Dorsolateral prefrontal cortex (tissue), 120 donors: ENCODE measurements at regions of chr7 and their contacts with region 1.

Region 1: DNA sequence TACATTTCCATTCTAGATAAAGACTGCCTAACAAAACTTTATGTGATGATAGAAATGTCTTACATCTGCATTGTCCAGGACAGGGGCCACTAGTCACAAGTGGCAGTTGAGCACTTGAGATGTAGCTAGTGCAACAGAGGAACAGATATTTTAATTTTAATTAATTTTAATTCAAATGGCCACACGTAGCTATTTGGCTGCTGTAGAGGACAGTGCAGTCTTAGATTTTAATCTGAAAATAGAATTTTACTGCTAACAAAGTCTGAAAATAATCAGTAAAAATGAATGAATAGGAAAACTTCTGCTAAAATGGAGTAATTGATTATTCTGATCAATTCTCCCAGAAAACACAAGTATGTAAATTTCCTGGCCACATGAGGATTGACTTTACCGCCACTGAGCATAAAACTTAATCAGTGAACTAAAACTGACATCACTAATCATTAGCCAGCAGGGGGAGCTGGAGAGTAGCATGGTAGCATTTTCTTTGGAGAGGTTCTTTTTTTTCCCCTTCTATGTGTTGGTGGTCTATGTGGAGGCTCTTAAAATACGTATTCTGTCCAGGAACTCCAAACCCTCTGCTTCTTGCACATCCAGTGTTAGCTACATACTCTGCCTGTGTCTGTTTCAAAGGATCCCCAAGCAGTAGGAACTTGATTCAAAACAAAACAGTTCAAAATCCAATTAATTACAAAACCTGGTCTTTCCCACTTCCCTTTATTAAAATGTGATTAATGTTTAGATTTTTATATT is 52.1 kb downstream of the TSPAN12 start:
- DNase-seq: peak in 2 of 10 donors; percentile 14 to 17
- H3K4me3 ChIP-seq: no peak overlapping the region
- H3K27ac ChIP-seq: no peak overlapping the region
- H3K27me3 ChIP-seq: no peaks in the 10 kb centered on the region
- CTCF ChIP-seq: peak; percentile 71 to 91 (median 84)

Region 2: GRCh38 chr7:120185940-120186682 is 619.7 kb before region 1 on chr7:
- intact Hi-C with region 1: no loop called
- DNase-seq: no peak
- H3K4me3 ChIP-seq: no peak overlapping the region
- H3K27ac ChIP-seq: peak overlapping the region in 35 of 59 donors; percentile 5 to 82 (median 57)
- H3K27me3 ChIP-seq: no peaks in the 10 kb centered on the region
- CTCF ChIP-seq: no peak

Region 3: GRCh38 chr7:120774481-120774880 is 31.3 kb before region 1 on chr7:
- intact Hi-C with region 1: no loop called
- DNase-seq: no peak
- H3K4me3 ChIP-seq: no peak overlapping the region
- H3K27ac ChIP-seq: no peak overlapping the region
- H3K27me3 ChIP-seq: no peaks in the 10 kb centered on the region
- CTCF ChIP-seq: no peak

Region 4: DNA sequence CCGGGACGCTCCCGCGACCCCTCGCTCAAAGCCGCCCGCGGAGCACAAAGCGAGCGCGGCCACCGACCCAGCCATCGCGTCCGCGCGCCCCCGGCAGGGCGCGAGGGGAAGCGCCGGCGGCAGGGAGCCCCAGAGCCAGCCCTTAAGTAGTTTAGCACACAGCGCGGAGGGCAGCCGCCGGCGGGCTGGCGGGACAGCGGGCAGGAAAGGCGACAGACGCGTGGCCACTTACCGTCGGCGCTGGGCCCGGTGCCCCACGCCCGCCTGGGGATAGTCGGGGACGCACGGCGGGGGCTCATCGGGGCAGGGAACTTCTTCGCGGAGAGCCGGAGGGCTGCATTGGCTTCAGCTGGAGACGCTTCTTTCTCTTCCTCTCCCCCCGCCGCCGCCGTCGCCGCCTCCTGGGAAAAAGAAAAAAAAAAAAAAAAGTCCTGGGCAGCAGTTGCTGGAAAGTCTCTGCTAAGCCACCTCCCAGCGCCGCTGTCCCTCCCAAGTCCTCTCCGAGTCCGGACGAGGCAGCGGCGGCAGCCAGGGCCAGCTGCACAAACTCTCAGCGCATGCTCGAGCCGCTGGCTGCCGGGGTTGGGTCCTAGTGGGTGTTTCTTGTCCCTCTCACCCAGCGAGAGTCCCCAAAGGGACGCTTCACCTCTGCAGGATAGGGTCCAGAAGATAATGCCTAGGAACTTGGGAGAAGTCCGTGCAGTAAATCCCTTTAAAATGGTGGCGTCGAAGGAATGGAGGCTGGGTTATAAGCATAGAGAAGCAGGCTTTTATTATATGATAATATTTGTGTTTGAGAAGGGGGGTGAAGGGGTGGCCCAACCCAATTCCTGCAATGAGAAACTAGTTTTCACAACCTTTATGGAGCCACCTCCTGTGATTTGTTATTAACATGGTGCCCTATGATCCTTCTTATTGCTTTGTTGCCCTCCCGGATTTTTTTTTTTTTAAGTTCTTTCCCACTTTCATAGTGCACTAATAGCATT is 52.1 kb after region 1 on chr7 and contains the start of gene TSPAN12:
- intact Hi-C with region 1: loop called in 1 of 2 experiments (anchors 10 kb)
- DNase-seq: peak in 9 of 10 donors; percentile 17 to 70 (median 48)
- H3K4me3 ChIP-seq: peak within 1 kb of the TSS; percentile 44 to 86 (median 73)
- H3K27ac ChIP-seq: peak within 1 kb of the TSS in 51 of 59 donors; percentile 7 to 87 (median 65)
- H3K27me3 ChIP-seq: peaks cover 0 to 12% (median 0%) of the 10 kb centered on the region in 45 donors
- CTCF ChIP-seq: peak in 53 of 56 donors; percentile 19 to 70 (median 49)
- total RNA-seq, gene TSPAN12: 1.6 to 13.4 (median 4.7) TPM

Region 5: DNA sequence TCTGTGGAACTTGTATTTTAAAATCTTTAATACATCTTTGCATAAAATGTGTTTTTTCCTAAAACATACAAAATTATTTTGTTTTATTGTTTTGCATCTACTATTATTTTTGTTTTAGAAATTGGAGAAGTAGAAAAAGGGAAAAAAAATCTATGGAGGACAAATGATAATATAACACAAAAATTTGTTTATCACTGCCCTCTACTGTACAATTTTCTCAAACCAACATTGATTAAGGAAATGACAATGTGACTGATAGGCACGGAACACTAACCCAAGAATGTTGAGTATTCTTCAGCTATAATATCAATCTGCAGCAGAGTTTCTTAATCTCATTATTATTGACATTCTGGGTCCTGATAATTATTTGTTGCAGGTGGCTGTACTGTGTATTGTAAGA is 135.3 kb after region 1 on chr7:
- intact Hi-C with region 1: loop called in 1 of 2 experiments (anchors 5 kb)
- DNase-seq: no peak
- H3K4me3 ChIP-seq: no peak overlapping the region
- H3K27ac ChIP-seq: no peak overlapping the region
- H3K27me3 ChIP-seq: no peaks in the 10 kb centered on the region
- CTCF ChIP-seq: peak in 35 of 56 donors; percentile 8 to 66 (median 27)

Region 6: GRCh38 chr7:121081327-121081936 is 275.6 kb after region 1 on chr7:
- intact Hi-C with region 1: loop called (anchors 5 to 10 kb)
- DNase-seq: no peak
- H3K4me3 ChIP-seq: no peak overlapping the region
- H3K27ac ChIP-seq: no peak overlapping the region
- H3K27me3 ChIP-seq: no peaks in the 10 kb centered on the region
- CTCF ChIP-seq: peak; percentile 56 to 92 (median 78)

Region 7: GRCh38 chr7:121167971-121168370 is 362.2 kb after region 1 on chr7:
- intact Hi-C with region 1: no loop called
- DNase-seq: no peak
- H3K4me3 ChIP-seq: no peak overlapping the region
- H3K27ac ChIP-seq: no peak overlapping the region
- H3K27me3 ChIP-seq: no peaks in the 10 kb centered on the region
- CTCF ChIP-seq: no peak